ENCODE measurements at regions of chr12 and their contacts with region 1.

Region 1: DNA sequence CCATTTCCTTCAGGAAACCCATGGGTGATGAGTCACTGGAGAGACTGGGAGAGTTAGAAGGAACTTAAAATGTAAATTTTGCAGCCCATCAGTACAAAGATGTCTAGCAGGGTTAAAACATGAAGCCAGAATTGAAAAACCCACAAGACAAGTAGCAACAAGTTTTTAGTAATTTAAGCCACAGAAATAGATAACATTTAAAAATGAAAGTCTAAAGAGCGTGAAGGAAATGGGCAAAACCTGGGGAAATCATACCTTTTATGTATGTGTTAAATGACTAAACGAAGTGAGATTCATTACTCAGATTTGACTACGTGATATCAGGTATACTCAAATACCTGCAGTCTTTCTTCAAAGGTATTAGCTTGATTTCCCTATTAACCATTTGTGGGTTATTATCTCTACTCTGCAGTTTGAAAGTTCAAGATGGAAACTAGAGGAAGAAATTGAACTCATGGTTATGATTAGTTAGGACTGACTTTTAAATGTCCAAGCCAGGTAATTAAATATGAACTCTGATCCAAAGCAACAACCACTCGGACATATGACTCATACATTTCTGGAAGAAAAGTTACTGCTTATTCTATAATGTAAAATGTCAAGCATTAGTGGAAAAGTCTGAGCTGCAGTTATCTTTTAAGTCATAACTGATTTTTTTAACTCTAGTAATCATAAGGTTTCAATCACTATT is 84.1 kb downstream of the ITPR2 start:
- DNase-seq: no peak
- ATAC-seq: peak; percentile 70
- H3K4me3 Mint-ChIP-seq: peak overlapping the region; percentile 30
- H3K27ac Mint-ChIP-seq: peak overlapping the region; percentile 83
- H3K4me1 Mint-ChIP-seq: peaks cover 75% of the 10 kb centered on the region
- H3K27me3 Mint-ChIP-seq: no peaks in the 10 kb centered on the region

Region 2: GRCh38 chr12:26791301-26791791 is 42.5 kb after region 1 on chr12:
- CTCF ChIA-PET with region 1: interaction called, 3 read pairs
- POLR2A ChIA-PET with region 1: no interaction called
- intact Hi-C with region 1: loop called in 1 of 2 experiments (anchors 5 kb)
- DNase-seq: no peak
- ATAC-seq: no peak
- H3K4me3 Mint-ChIP-seq: no peak overlapping the region
- H3K27ac Mint-ChIP-seq: no peak overlapping the region
- H3K4me1 Mint-ChIP-seq: peaks cover 29% of the 10 kb centered on the region
- H3K27me3 Mint-ChIP-seq: no peaks in the 10 kb centered on the region

Region 3: GRCh38 chr12:26808766-26809476 is 60.0 kb after region 1 on chr12:
- CTCF ChIA-PET with region 1: interaction called, 3 read pairs
- POLR2A ChIA-PET with region 1: interaction called, 3 read pairs
- intact Hi-C with region 1: loop called (anchors 1 to 2 kb)
- DNase-seq: no peak
- ATAC-seq: peak; percentile 87
- H3K4me3 Mint-ChIP-seq: no peak overlapping the region
- H3K27ac Mint-ChIP-seq: peak overlapping the region; percentile 63
- H3K4me1 Mint-ChIP-seq: peaks cover 42% of the 10 kb centered on the region
- H3K27me3 Mint-ChIP-seq: no peaks in the 10 kb centered on the region

Region 4: GRCh38 chr12:27123642-27124041 is 374.8 kb after region 1 on chr12:
- CTCF ChIA-PET with region 1: no interaction called
- POLR2A ChIA-PET with region 1: no interaction called
- intact Hi-C with region 1: no loop called
- DNase-seq: no peak
- ATAC-seq: no peak
- H3K4me3 Mint-ChIP-seq: no peak overlapping the region
- H3K27ac Mint-ChIP-seq: no peak overlapping the region
- H3K4me1 Mint-ChIP-seq: no peaks in the 10 kb centered on the region
- H3K27me3 Mint-ChIP-seq: no peaks in the 10 kb centered on the region

Region 5: DNA sequence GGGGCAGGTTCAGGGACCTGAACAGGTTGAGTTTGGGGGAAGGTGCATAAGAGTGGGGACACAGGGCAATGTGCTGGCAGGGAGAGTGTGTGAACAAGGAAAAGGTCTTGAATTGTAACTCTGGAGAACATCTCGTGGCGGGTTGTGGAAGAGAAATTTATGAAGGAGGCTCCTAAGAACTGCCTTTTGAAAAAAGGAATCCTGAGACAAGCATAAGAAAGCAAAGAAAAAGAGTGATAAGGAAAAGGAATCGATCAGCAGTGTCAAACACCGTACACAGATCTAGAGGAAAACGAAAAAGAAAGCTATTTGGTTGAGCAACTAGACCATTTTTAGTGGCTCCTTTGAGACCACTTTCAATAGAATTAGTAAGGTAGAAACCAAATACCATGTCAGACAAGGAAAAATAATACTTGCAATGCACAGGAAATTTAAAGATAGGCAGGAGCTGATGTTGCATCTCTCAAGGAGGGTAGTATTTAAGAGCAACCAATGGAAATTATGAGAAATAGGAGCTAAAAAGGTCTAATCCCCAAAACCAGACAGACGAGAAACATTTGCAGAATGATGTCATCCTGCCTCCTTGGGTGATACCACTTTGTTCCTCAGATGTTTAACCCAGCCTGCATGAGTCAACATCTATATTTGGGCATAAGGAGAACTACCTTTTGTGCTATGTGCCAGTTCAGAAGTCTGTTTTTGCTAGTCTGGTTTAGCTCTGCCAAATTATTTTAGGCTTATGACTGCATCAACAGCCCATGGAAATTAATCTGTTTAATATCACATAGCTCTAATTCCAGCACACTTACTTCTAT is 430.7 kb after region 1 on chr12:
- CTCF ChIA-PET with region 1: no interaction called
- POLR2A ChIA-PET with region 1: no interaction called
- intact Hi-C with region 1: loop called in 1 of 2 experiments (anchors 10 kb)
- DNase-seq: peak; percentile 58
- ATAC-seq: peak; percentile 95
- H3K4me3 Mint-ChIP-seq: peak overlapping the region; percentile 7
- H3K27ac Mint-ChIP-seq: peak overlapping the region; percentile 90
- H3K4me1 Mint-ChIP-seq: peaks cover 41% of the 10 kb centered on the region
- H3K27me3 Mint-ChIP-seq: no peaks in the 10 kb centered on the region

Region 6: GRCh38 chr12:27207615-27208413 is 458.9 kb after region 1 on chr12:
- CTCF ChIA-PET with region 1: no interaction called
- POLR2A ChIA-PET with region 1: no interaction called
- intact Hi-C with region 1: loop called in 1 of 2 experiments (anchors 10 kb)
- DNase-seq: peak; percentile 74
- ATAC-seq: peak; percentile 99
- H3K4me3 Mint-ChIP-seq: no peak overlapping the region
- H3K27ac Mint-ChIP-seq: peak overlapping the region; percentile 65
- H3K4me1 Mint-ChIP-seq: peaks cover 25% of the 10 kb centered on the region
- H3K27me3 Mint-ChIP-seq: no peaks in the 10 kb centered on the region

Region 7: GRCh38 chr12:27462151-27462694 is 713.3 kb after region 1 on chr12:
- CTCF ChIA-PET with region 1: no interaction called
- POLR2A ChIA-PET with region 1: no interaction called
- intact Hi-C with region 1: loop called in 1 of 2 experiments (anchors 2 kb)
- DNase-seq: peak; percentile 35
- ATAC-seq: peak; percentile 51
- H3K4me3 Mint-ChIP-seq: no peak overlapping the region
- H3K27ac Mint-ChIP-seq: no peak overlapping the region
- H3K4me1 Mint-ChIP-seq: peaks cover 54% of the 10 kb centered on the region
- H3K27me3 Mint-ChIP-seq: peaks cover 14% of the 10 kb centered on the region